Transverse colon (tissue), 4 donors: ENCODE measurements at regions of chr15 and their contacts with region 1.

Region 1: DNA sequence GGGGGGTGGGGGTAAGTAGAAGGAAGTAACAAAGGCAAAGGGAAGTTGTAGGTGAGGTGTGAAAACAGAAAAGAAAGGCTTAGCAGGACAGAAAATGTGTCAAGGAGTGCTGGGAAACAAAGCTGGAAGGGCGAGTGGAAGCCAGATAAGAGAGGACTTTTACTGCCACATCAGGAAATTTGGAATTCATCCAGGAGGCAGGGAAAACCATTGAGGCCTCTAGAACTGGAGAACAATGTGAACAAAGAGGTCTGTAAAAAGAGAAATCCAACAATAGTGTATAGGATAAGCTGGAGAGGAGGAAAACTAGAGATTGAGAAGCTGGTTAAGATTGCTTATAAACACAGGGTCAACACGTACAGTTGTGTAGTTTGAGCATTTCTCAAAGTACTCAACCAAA is 116.6 kb downstream of the NTRK3 start:
- DNase-seq: no peak
- H3K4me3 ChIP-seq: no peak overlapping the region
- H3K27ac ChIP-seq: no peak overlapping the region
- H3K4me1 ChIP-seq: no peaks in the 10 kb centered on the region
- H3K27me3 ChIP-seq: no peaks in the 10 kb centered on the region
- CTCF ChIP-seq: no peak
- EP300 ChIP-seq: no peak
- POLR2A ChIP-seq: no peak

Region 2: DNA sequence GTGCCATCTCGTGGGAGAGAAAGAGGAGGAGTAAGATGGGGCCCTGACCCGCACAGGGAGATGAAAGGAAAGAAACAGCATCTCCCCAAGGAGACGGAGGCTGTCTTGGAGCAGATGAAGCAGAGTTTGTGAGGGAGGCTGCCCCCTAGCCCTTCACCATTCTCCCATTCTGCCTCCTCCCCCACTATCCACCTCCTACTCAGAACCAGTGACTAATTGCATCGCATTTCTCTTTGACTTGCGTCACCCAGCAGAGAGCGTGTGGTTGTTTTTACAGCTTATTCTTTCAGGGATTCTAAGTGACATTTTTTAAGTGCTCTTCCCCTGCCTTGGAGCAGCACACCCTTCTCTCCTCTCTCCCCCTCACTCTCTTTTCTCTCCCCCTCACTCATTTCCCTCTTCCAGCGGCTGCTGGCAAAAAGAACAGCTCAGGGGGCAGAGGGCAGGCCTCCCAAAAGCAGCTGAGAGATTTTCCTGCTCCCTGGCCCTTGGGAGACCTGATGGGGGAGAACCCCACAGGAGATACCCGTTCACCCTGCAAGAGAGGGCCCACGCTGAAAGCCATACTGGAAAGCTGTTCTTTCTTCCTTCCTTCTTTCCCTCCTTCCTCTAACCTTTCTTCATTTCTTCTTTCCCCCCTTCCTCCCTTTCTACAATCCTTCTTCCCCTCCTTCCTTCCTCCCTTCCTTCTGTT is 235.4 kb after region 1 on chr15:
- in situ Hi-C with region 1: no loop called
- intact Hi-C with region 1: loop called (anchors 5 kb)
- DNase-seq: no peak
- H3K4me3 ChIP-seq: no peak overlapping the region
- H3K27ac ChIP-seq: no peak overlapping the region
- H3K4me1 ChIP-seq: no peaks in the 10 kb centered on the region
- H3K27me3 ChIP-seq: no peaks in the 10 kb centered on the region
- CTCF ChIP-seq: no peak
- EP300 ChIP-seq: no peak
- POLR2A ChIP-seq: no peak